ENCODE measurements at regions of chr1 and their contacts with region 1.

Region 1: GRCh38 chr1:232899268-232899667 is 51.1 kb upstream of the NTPCR start:
- DNase-seq: no peak
- ATAC-seq: no peak
- H3K4me3 Mint-ChIP-seq: no peak overlapping the region
- H3K27ac Mint-ChIP-seq: no peak overlapping the region
- H3K4me1 Mint-ChIP-seq: peaks cover 43% of the 10 kb centered on the region
- H3K27me3 Mint-ChIP-seq: peaks cover 14% of the 10 kb centered on the region
- CTCF ChIP-seq: no peak

Region 2: GRCh38 chr1:232880354-232880753 is 18.9 kb before region 1 on chr1:
- CTCF ChIA-PET with region 1: interaction called, 11 read pairs
- POLR2A ChIA-PET with region 1: no interaction called
- DNase-seq: peak; percentile 68
- ATAC-seq: peak; percentile 90
- H3K4me3 Mint-ChIP-seq: no peak overlapping the region
- H3K27ac Mint-ChIP-seq: no peak overlapping the region
- H3K4me1 Mint-ChIP-seq: peaks cover 2% of the 10 kb centered on the region; the same call in 1 of the 2 replicates
- H3K27me3 Mint-ChIP-seq: no peaks in the 10 kb centered on the region
- CTCF ChIP-seq: peak; percentile 75

Measured in WTC11 (cell line).